ENCODE measurements at regions of chr22 and their contacts with region 1.

Region 1: GRCh38 chr22:31230871-31231621 is 18.9 kb downstream of the LIMK2 start:
- DNase-seq: peak in 3 of 4 experiments; percentile 24 to 61 (median 43)
- ATAC-seq: peak; percentile 85
- H3K4me3 ChIP-seq: no peak overlapping the region
- H3K27ac ChIP-seq: no peak overlapping the region
- H3K4me1 ChIP-seq: peaks cover 0 to 34% of the 10 kb centered on the region in 2 experiments; a peak in 3 of 5 replicates
- H3K27me3 ChIP-seq: no peaks in the 10 kb centered on the region
- CTCF ChIP-seq: peak; percentile 60 to 83 (median 73)
- EP300 ChIP-seq: no peak
- POLR2A ChIP-seq: no peak
- RAD21 ChIP-seq: peak; percentile 78 to 82

Region 2: DNA sequence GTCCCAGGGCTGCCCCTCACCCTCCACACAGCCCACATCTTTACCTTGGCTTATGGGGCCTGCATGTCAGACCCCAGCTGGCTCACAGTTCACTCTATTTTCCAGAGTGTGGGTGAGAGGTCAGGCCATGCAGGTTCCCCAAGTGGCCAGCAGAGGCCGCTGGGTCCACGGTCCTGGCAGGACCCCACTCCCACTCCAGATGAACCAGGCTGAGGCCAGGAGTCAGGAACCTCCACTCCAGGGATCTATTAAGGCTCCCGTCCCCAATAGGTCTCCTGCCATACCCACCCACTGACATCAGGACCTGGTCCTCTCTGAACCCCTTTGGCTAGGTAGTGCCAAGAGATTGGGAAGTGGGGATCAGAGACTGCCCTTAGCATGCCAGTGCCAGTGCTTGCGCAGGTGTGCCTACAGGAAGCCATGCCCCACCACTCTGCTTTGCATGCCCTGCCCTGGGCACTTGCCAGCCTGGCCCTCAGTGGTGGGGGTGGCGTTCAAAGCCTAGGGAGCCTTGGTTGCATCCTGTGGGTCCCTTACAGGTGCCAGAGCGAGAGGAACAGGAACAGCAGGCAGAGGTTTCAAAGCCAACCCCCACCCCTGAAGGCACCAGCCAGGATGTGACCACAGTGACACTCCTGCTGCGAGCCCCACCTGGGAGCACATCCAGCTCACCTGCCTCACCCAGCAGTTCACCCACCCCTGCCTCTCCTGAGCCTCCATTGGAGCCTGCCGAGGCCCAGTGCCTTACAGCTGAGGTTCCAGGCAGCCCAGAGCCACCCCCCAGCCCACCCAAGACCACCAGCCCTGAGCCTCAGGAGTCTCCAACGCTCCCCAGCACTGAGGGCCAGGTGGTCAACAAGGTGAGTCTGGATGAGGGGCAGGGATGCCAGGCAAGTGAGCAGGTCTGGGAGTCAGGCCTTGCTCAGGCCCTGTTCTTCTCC is 141.6 kb before region 1 on chr22:
- CTCF ChIA-PET with region 1: no interaction called
- POLR2A ChIA-PET with region 1: interaction called, 3 read pairs
- in situ Hi-C with region 1: no loop called
- intact Hi-C with region 1: loop called (anchors 1 kb)
- DNase-seq: peak; percentile 59 to 64 (median 61)
- ATAC-seq: peak; percentile 60
- H3K4me3 ChIP-seq: no peak overlapping the region
- H3K27ac ChIP-seq: no peak overlapping the region
- H3K4me1 ChIP-seq: peaks cover 19 to 55% of the 10 kb centered on the region in 2 experiments; a peak in 4 of 5 replicates
- H3K27me3 ChIP-seq: no peaks in the 10 kb centered on the region
- CTCF ChIP-seq: peak; percentile 74 to 84 (median 81)
- EP300 ChIP-seq: no peak
- POLR2A ChIP-seq: no peak
- RAD21 ChIP-seq: peak; percentile 72 to 83

Region 3: GRCh38 chr22:31107178-31107893 is 123.7 kb before region 1 on chr22 and contains the start of gene SELENOM:
- CTCF ChIA-PET with region 1: interaction called, 5 read pairs
- POLR2A ChIA-PET with region 1: no interaction called
- in situ Hi-C with region 1: loop called (anchors 5 kb)
- intact Hi-C with region 1: loop called (anchors 2 kb)
- DNase-seq: peak; percentile 93 to 96 (median 94)
- ATAC-seq: peak; percentile 100
- H3K4me3 ChIP-seq: peak within 1 kb of the TSS; percentile 52
- H3K27ac ChIP-seq: peak within 1 kb of the TSS; percentile 68
- H3K4me1 ChIP-seq: peaks cover 2 to 17% of the 10 kb centered on the region in 2 experiments; a peak in 4 of 5 replicates
- H3K27me3 ChIP-seq: no peaks in the 10 kb centered on the region
- CTCF ChIP-seq: peak; percentile 90 to 92 (median 90)
- EP300 ChIP-seq: no peak
- POLR2A ChIP-seq: no peak
- RAD21 ChIP-seq: peak; percentile 88 to 89
- polyA plus RNA-seq, gene SELENOM: 1.2 to 2.9 TPM

Region 4: DNA sequence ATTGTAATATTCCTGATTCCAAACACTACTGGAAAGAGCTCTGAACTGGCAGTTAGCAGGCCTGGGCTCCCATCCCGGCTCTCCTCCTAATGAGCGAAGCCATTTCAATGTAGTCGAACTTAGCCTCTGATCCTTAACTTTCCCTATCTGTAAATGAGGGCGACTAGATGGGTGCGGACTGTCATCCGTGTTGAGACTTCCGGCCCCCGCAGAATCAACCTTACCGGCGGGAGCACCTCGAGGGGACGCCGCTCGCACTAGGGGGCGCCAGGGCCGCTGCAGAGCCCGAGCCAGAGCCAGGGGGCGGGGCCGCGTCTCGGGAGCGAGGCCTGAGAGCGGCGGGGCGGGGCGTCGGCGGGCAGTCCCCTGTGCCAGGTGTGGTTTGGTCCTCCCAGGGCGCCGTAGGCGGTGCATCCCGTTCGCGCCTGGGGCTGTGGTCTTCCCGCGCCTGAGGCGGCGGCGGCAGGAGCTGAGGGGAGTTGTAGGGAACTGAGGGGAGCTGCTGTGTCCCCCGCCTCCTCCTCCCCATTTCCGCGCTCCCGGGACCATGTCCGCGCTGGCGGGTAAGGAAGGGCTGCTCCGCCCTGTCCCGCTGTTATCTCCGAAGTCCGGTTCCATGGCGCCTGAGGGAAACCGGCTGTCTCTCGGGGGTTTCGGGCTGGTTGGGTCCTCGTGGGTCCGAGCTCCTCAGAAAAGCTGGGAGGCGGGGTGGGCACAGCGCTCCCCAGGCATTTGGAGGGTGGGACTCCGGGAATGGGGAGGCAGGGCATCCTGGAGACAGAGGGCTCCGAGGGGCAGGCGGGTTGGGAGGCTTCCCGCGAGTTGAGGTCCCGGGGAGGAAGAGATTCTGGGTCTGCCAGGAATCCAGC is 18.9 kb before region 1 on chr22 and contains the start of gene LIMK2:
- CTCF ChIA-PET with region 1: interaction called, 12 read pairs
- POLR2A ChIA-PET with region 1: interaction called, 4 read pairs
- in situ Hi-C with region 1: no loop called
- intact Hi-C with region 1: loop called (anchors 2 kb)
- DNase-seq: peak; percentile 92 to 95 (median 93)
- ATAC-seq: peak; percentile 99
- H3K4me3 ChIP-seq: peak within 1 kb of the TSS; percentile 85
- H3K27ac ChIP-seq: peak within 1 kb of the TSS; percentile 62
- H3K4me1 ChIP-seq: peaks cover 5 to 17% of the 10 kb centered on the region in 2 experiments; a peak in 4 of 5 replicates
- H3K27me3 ChIP-seq: no peaks in the 10 kb centered on the region
- CTCF ChIP-seq: peak; percentile 68 to 87 (median 77)
- EP300 ChIP-seq: no peak
- POLR2A ChIP-seq: peak; percentile 76
- RAD21 ChIP-seq: peak; percentile 70 to 77
- polyA plus RNA-seq, gene LIMK2: 1.1 to 1.3 TPM

Region 5: DNA sequence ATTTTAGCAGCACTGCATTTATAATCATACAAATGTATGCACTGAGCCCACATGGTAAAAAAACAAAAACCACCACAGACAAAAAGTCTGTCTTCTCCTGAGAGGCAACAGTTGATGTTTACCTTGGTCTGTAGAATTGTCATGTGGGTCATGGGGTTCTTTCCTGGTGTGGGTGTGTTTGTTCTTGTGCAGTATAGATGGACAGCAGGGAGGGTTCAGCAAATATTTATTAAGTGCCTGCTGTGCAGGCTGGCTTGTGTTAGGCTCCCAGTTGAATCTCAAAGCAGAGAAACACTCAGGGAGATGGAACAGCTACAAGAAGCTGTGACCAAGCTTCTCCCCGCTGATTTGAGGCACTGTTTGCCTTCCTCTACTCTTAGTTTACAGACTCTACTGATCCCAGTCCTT is 348.8 kb after region 1 on chr22:
- CTCF ChIA-PET with region 1: no interaction called
- POLR2A ChIA-PET with region 1: no interaction called
- in situ Hi-C with region 1: no loop called
- intact Hi-C with region 1: no loop called
- DNase-seq: no peak
- ATAC-seq: no peak
- H3K4me3 ChIP-seq: no peak overlapping the region
- H3K27ac ChIP-seq: no peak overlapping the region
- H3K4me1 ChIP-seq: peaks cover 5 to 13% of the 10 kb centered on the region in 2 experiments; a peak in 4 of 5 replicates
- H3K27me3 ChIP-seq: no peaks in the 10 kb centered on the region
- CTCF ChIP-seq: no peak
- EP300 ChIP-seq: no peak
- POLR2A ChIP-seq: no peak
- RAD21 ChIP-seq: no peak